Heart right ventricle (tissue), 16 donors: ENCODE measurements at regions of chr6 and their contacts with region 1.

Region 1: GRCh38 chr6:17149571-17149970 is 47.7 kb downstream of the STMND1 start:
- DNase-seq: no peak
- ATAC-seq: no peak
- H3K4me3 ChIP-seq: no peak overlapping the region
- H3K27ac ChIP-seq: no peak overlapping the region
- H3K4me1 ChIP-seq: no peaks in the 10 kb centered on the region
- H3K27me3 ChIP-seq: no peaks in the 10 kb centered on the region
- CTCF ChIP-seq: no peak

Region 2: GRCh38 chr6:17297271-17298080 is 147.9 kb after region 1 on chr6:
- intact Hi-C with region 1: no loop called
- DNase-seq: no peak
- ATAC-seq: peak in 3 of 8 donors; percentile 28 to 72 (median 47)
- H3K4me3 ChIP-seq: no peak overlapping the region
- H3K27ac ChIP-seq: peak overlapping the region in 8 of 10 donors; percentile 4 to 55 (median 28)
- H3K4me1 ChIP-seq: peaks cover 0 to 34% (median 8%) of the 10 kb centered on the region in 9 donors
- H3K27me3 ChIP-seq: no peaks in the 10 kb centered on the region
- CTCF ChIP-seq: no peak

Region 3: DNA sequence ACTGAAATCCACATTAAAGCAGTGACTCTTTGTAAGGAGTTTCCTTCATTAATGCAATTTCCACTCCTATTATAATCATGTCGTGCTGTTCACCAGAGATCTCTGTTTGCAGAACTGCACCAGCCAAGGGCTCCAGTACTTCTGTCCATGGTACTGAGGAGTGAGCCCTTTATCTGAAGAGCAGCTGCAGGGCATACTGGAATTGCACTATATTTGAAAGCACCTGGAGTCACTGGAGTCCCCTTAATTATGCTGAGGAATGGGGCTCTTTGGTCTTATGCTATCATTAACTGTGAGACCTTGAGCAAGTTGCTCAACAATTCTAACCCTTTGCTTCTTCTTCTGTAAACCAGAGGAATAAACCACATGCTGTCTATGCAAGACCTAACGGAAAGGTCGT is 618.8 kb after region 1 on chr6:
- intact Hi-C with region 1: loop called in 1 of 10 experiments (anchors 10 kb)
- DNase-seq: no peak
- ATAC-seq: peak in 2 of 8 donors; percentile 58 to 62
- H3K4me3 ChIP-seq: no peak overlapping the region
- H3K27ac ChIP-seq: no peak overlapping the region
- H3K4me1 ChIP-seq: no peaks in the 10 kb centered on the region
- H3K27me3 ChIP-seq: no peaks in the 10 kb centered on the region
- CTCF ChIP-seq: no peak